Left cardiac atrium (tissue), 4 donors: ENCODE measurements at regions of chr1 and their contacts with region 1.

Region 1: DNA sequence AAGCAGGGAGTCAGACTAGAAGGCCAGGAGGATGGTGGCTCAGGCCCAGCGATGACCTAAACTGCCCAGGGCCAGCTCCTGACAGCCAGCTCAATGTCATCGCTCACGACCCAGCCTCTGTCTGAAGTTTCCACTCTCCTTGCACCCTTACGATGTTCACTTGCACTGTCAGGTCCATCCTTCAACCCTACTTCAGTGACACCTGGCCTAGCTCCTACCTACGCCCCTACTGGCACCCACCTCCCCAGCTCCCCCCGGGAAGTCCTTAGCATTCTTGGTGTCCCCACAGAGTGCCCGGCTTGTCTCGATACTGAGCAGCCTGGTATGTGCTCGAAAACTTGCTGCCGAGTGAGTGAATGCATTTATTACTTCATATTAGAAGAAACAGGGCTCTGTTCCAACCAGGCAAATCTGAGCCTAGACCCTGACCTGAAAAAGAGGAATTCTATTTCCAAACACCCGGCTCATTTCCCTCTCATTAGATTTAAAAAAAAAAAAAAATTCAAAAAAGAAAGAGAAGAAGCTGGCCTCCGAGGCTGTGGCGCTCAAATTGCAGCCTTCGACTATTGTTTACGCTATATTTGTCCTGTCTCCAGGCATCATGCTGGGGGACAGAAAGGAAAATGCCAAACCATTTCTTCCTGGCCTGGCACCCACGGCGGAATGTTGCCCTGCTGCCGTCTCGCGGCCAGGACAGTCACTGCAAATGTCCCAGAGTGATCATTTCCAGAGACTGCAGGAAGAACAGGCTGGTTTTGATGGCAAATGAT is 29.8 kb upstream of the LRRC38 start:
- DNase-seq: peak; percentile 64
- ATAC-seq: peak; percentile 81 to 84

Region 2: GRCh38 chr1:13443335-13443984 is 100.2 kb before region 1 on chr1:
- intact Hi-C with region 1: no loop called
- DNase-seq: no peak
- ATAC-seq: no peak

Region 3: DNA sequence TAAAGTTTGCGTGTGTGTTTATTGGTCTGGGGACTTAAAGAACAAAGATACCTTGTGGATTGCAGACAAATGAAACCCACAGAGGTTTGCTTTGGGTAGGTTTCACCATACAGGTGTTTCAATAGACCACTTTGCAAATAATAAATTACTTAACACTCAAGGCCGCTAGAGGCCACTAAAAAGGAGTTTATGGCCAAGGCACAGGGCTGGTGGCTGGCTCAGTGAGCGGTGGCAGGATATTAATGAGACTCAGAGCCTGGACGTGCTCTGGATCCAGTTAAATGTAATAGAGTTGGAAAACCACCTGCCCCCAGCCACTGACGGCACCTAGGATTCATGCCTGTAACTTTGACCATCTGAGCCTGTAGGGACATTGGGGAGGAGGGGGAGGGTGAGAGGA is 74.3 kb before region 1 on chr1:
- intact Hi-C with region 1: loop called in 1 of 2 experiments (anchors 10 kb)
- DNase-seq: no peak
- ATAC-seq: peak; percentile 47 to 53

Region 4: DNA sequence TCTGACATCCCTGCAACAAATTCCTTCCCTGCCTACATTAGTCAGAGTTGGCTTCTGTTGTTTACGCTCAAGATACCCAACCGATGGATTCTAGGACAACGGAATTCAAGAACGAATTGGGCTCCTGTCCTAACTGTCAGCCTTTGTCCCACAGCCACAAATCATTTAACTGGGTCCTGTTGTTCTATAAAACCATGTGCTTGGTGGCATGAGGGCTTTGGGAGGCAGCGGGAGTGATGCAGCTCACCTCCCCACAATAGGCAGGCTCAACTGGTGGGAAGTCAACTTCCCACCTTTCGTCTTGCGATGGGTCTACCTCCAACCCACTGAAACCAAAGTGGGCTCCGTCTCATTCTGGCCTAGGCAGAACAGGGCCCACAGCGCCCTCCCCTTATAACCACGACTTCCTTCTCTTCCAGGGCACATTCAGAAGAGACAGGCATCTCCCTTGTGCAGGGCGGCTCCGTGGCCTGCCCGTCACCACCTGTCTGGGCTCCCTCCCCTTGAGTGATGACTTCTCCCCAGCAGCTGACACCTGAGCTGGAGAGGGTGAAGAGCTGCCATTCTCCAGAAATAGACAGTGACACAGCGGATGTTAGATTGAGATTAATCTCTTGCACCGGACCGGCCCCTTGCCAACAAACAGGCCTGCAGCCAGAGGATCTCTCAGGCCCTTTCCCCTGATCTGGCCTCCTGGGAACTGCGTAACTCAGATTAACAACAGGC is 56.3 kb before region 1 on chr1:
- intact Hi-C with region 1: loop called in 1 of 2 experiments (anchors 5 kb)
- DNase-seq: peak; percentile 68
- ATAC-seq: peak; percentile 94

Region 5: DNA sequence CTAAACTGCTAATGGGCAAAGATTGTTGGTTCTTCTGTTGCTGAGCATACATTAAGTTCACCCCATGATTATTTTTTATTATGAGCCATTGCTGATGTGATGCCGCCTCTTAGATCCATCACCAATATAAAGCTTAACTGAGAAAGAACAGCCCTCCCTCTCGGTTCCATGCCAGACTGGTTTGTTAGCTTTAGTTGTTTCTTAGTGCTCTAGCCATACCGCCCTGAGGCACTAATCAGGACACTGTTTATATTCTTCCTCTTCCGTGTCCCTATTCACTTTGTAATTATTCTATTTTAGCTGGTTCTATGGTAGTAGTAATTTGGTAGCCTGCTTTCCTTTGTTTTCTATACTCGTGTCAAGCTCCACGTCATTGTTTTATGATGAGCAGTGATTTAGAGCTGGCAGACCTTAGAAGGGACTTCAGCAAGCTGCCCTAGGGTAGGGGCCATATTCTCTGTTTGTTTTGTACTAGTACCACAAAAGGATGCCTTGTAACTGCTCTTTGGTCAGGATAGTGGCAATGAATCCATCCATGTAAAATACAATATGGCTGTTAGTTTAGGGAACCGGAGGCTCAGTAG is 12.7 kb after region 1 on chr1:
- intact Hi-C with region 1: no loop called
- DNase-seq: no peak
- ATAC-seq: no peak

Region 6: GRCh38 chr1:13813398-13814012 is 269.9 kb after region 1 on chr1:
- intact Hi-C with region 1: no loop called
- DNase-seq: no peak
- ATAC-seq: peak; percentile 48 to 51